B cell (primary cell): ENCODE measurements at regions of chr15 and their contacts with region 1.

Region 1: DNA sequence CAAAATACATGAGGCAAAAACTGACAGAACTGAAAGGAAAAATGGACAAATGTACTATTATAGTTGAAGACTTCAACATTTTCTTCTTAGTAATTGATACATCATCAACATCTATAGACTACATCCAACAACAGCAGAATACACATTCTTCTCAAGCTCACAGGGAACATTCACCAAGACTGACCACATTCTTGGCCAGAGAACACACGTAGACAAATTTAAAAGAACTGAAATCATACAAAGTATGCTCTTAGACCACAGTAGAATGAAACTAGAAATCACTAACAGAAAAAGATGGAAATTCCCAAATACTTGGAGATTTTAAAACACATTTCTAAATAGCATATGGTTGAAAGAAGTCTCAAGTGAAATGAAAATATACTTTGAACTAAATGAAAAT is 55.1 kb upstream of the NSMCE3 start:
- DNase-seq: no peak
- ATAC-seq: no peak
- H3K4me3 ChIP-seq: no peak overlapping the region
- H3K4me3 Mint-ChIP-seq: no peak overlapping the region
- H3K27ac ChIP-seq: no peak overlapping the region
- H3K27ac Mint-ChIP-seq: no peak overlapping the region
- H3K4me1 ChIP-seq: peaks cover 10 to 14% of the 10 kb centered on the region in 2 donors
- H3K4me1 Mint-ChIP-seq: peaks cover 20% of the 10 kb centered on the region
- H3K27me3 ChIP-seq: no peaks in the 10 kb centered on the region
- H3K27me3 Mint-ChIP-seq: no peaks in the 10 kb centered on the region
- CTCF ChIP-seq: no peak

Region 2: GRCh38 chr15:29269485-29270168 is 55.1 kb before region 1 on chr15 and contains the start of gene NSMCE3:
- CTCF ChIA-PET with region 1: no interaction called
- POLR2A ChIA-PET with region 1: no interaction called
- intact Hi-C with region 1: loop called (anchors 1 kb)
- DNase-seq: peak; percentile 96
- ATAC-seq: peak; percentile 93
- H3K4me3 ChIP-seq: peak within 1 kb of the TSS; percentile 64 to 80 (median 76)
- H3K4me3 Mint-ChIP-seq: peak within 1 kb of the TSS; percentile 99
- H3K27ac ChIP-seq: peak within 1 kb of the TSS; percentile 93 to 98
- H3K27ac Mint-ChIP-seq: peak within 1 kb of the TSS; percentile 99
- H3K4me1 ChIP-seq: peaks cover 32% of the 10 kb centered on the region in 2 donors
- H3K4me1 Mint-ChIP-seq: peaks cover 52% of the 10 kb centered on the region
- H3K27me3 ChIP-seq: no peaks in the 10 kb centered on the region
- H3K27me3 Mint-ChIP-seq: no peaks in the 10 kb centered on the region
- CTCF ChIP-seq: no peak
- total RNA-seq, gene NSMCE3: 16.1 and 16.8 TPM in 2 replicates

Region 3: GRCh38 chr15:29294732-29295325 is 29.9 kb before region 1 on chr15:
- CTCF ChIA-PET with region 1: no interaction called
- POLR2A ChIA-PET with region 1: no interaction called
- intact Hi-C with region 1: no loop called
- DNase-seq: no peak
- ATAC-seq: no peak
- H3K4me3 ChIP-seq: no peak overlapping the region
- H3K4me3 Mint-ChIP-seq: no peak overlapping the region
- H3K27ac ChIP-seq: no peak overlapping the region
- H3K27ac Mint-ChIP-seq: no peak overlapping the region
- H3K4me1 ChIP-seq: no peaks in the 10 kb centered on the region
- H3K4me1 Mint-ChIP-seq: no peaks in the 10 kb centered on the region
- H3K27me3 ChIP-seq: peaks cover 0 to 2% (median 1%) of the 10 kb centered on the region in 4 experiments
- H3K27me3 Mint-ChIP-seq: peaks cover 8% of the 10 kb centered on the region
- CTCF ChIP-seq: no peak

Region 4: DNA sequence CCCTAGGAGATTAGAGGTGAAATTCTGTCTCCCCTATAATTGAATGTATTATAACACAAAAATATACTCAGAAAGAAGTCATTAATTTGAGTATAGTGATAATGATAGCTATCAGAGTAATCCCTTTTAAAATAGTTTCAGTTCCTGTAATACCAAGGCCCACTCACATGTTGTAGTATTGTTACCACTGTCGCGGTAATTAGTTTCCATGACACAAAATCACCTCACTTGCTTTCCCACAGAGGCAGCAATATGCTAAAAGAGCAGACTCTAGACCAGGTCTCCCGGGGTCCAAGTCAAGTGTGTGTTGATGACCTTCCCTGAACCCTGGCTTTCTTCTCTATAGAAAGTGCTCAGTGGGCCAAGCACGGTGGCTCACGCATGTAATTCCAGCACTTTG is 15.6 kb before region 1 on chr15:
- CTCF ChIA-PET with region 1: interaction called, 4 read pairs
- POLR2A ChIA-PET with region 1: no interaction called
- intact Hi-C with region 1: loop called (anchors 1 kb)
- DNase-seq: peak; percentile 46
- ATAC-seq: peak; percentile 73
- H3K4me3 ChIP-seq: no peak overlapping the region
- H3K4me3 Mint-ChIP-seq: no peak overlapping the region
- H3K27ac ChIP-seq: no peak overlapping the region
- H3K27ac Mint-ChIP-seq: peak overlapping the region; percentile 51
- H3K4me1 ChIP-seq: peaks cover 10 to 14% of the 10 kb centered on the region in 2 donors
- H3K4me1 Mint-ChIP-seq: peaks cover 29% of the 10 kb centered on the region
- H3K27me3 ChIP-seq: no peaks in the 10 kb centered on the region
- H3K27me3 Mint-ChIP-seq: peaks cover 8% of the 10 kb centered on the region
- CTCF ChIP-seq: no peak